CD4-positive, alpha-beta T cell (primary cell): ENCODE measurements at regions of chr20 and their contacts with region 1.

Region 1: DNA sequence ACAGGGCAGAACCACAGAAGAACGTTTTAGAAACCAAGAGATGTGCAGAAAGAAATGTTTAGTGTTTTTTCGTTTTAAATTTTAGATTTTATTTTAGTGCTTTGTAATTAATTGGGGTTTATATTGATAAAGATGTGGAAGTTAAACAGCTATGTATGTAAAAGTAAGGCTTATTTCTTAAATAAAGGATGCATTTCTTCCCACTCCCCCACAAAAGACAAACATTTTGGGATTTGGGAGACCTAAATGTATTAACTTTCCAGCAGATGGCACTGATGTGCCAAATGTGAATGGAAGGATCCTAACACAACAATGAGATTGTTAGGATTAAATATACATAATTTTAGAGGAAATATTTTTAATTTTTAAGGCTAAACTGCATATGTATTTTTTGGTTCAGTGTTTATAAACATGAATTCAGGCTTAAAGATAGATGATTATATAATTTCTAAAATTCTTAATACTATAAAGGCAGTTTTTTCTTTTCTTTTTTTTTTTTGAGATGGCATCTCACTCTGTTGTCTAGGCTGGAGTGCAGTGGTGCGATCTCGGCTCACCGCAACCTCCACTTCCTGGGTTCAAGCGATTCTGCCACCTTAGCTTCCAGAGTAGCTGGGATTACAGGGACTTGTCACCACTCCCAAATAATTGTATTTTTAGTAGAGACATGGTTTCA is 12.0 kb downstream of the PFDN4 start:
- DNase-seq: no peak
- ATAC-seq: no peak
- H3K4me3 ChIP-seq: no peak overlapping the region
- H3K4me3 Mint-ChIP-seq: no peak overlapping the region
- H3K27ac ChIP-seq: no peak overlapping the region
- H3K27ac Mint-ChIP-seq: no peak overlapping the region
- H3K4me1 ChIP-seq: peaks cover 13% of the 10 kb centered on the region
- H3K4me1 Mint-ChIP-seq: peaks cover 21% of the 10 kb centered on the region
- H3K27me3 ChIP-seq: no peaks in the 10 kb centered on the region
- H3K27me3 Mint-ChIP-seq: no peaks in the 10 kb centered on the region
- CTCF ChIP-seq: peak; percentile 36

Region 2: DNA sequence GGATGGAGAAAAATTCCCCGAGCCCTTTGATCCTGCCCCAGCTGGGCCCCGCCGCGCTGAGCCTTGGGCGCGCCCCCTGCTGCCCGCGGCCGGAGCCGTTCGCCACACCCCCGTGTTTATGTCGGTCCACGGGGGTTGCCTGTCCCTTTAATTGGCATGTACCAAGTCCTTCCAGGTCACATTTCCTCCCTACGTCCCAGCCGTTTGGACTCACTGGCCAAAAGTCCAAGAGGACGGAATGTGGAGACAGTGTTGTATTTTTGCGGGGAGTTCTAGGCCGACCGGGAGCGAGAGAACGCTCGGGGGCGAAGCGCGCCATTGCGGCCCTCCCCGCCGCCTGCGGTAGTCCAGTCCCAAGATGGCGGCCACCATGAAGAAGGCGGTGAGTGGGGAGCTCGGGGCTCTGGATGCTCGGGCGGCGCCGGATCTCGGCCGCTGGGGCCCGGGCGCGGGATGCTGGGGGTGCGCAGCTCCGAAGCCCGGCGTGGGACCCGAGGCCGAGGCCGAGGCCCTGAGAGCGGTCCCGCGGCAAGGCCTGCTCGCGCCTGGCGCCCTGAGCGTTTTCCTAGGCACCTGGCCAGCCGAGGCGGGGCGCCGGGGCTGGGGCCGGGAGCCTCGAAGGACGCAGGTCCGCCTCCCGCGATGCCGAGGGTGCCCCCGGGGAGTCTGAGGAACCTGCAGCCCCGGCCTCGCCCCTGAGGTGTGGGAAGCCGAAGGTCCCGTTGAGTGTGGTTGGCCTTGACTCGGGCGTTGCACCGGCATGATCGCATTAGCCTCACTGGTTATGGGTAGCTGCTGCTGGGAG is 11.9 kb before region 1 on chr20 and contains the start of gene PFDN4:
- CTCF ChIA-PET with region 1: interaction called, 4 read pairs
- POLR2A ChIA-PET with region 1: interaction called, 14 read pairs
- intact Hi-C with region 1: no loop called
- DNase-seq: peak; percentile 55 to 90 (median 68)
- ATAC-seq: peak; percentile 89
- H3K4me3 ChIP-seq: peak within 1 kb of the TSS; percentile 85
- H3K4me3 Mint-ChIP-seq: peak within 1 kb of the TSS; percentile 91
- H3K27ac ChIP-seq: peak within 1 kb of the TSS; percentile 90 to 95
- H3K27ac Mint-ChIP-seq: peak within 1 kb of the TSS; percentile 98
- H3K4me1 ChIP-seq: peaks cover 17% of the 10 kb centered on the region
- H3K4me1 Mint-ChIP-seq: peaks cover 36% of the 10 kb centered on the region
- H3K27me3 ChIP-seq: no peaks in the 10 kb centered on the region
- H3K27me3 Mint-ChIP-seq: no peaks in the 10 kb centered on the region
- CTCF ChIP-seq: peak; percentile 66
- total RNA-seq, gene PFDN4: 17.5 to 17.7 TPM

Region 3: GRCh38 chr20:54649511-54649962 is 429.6 kb after region 1 on chr20:
- CTCF ChIA-PET with region 1: no interaction called
- POLR2A ChIA-PET with region 1: no interaction called
- intact Hi-C with region 1: loop called (anchors 2 to 5 kb)
- DNase-seq: peak; percentile 24 to 67 (median 46)
- ATAC-seq: peak; percentile 46
- H3K4me3 ChIP-seq: no peak overlapping the region
- H3K4me3 Mint-ChIP-seq: no peak overlapping the region
- H3K27ac ChIP-seq: no peak overlapping the region
- H3K27ac Mint-ChIP-seq: no peak overlapping the region
- H3K4me1 ChIP-seq: no peaks in the 10 kb centered on the region
- H3K4me1 Mint-ChIP-seq: no peaks in the 10 kb centered on the region
- H3K27me3 ChIP-seq: no peaks in the 10 kb centered on the region
- H3K27me3 Mint-ChIP-seq: peaks cover 15% of the 10 kb centered on the region
- CTCF ChIP-seq: peak; percentile 84